ENCODE measurements at regions of chr9 and their contacts with region 1.

Region 1: DNA sequence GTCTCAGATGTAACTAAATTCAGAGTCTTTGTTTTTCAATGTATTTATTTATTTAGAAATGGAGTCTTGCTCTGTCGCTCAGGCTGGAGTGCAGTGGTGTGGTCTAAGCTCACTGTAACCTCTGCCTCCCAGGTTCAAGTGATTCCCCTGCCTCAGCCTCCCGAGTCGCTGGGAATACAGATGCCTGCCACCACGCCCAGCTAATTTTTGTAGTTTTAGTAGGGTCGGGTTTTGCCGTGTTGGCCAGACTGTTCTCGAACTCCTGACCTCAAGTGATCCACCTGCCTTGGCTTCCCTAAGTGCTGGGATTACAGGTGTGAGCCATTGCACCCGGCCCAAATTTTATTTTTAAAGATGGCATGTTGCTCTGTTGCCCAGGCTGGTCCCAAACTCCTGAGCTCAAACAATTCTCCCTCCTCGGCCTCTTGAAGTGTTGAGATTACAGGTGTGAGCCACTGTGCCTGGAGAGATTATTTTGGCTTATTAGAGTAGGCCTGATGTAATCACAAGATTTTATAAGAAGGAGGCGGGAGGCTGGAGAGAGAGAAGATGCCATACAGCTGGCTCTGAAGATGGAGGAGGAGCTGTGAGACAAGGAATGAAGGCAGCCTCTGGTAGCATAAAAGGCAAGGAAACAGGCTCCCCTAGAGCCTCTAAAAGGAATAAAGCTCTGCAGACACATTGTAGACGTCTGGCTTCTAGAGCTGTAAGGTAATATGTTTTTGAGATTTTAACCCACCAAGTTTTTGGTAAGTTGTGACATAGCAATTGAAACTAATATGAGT is 12.9 kb upstream of the KLF9 start:
- DNase-seq: no peak
- H3K4me3 ChIP-seq: no peak overlapping the region
- H3K27ac ChIP-seq: peak overlapping the region; percentile 15 to 56 (median 38)
- H3K4me1 ChIP-seq: peaks cover 0 to 15% (median 4%) of the 10 kb centered on the region in 4 donors
- H3K27me3 ChIP-seq: no peaks in the 10 kb centered on the region
- CTCF ChIP-seq: peak in 1 of 5 experiments; percentile 27
- EP300 ChIP-seq: no peak
- POLR2A ChIP-seq: no peak

Region 2: DNA sequence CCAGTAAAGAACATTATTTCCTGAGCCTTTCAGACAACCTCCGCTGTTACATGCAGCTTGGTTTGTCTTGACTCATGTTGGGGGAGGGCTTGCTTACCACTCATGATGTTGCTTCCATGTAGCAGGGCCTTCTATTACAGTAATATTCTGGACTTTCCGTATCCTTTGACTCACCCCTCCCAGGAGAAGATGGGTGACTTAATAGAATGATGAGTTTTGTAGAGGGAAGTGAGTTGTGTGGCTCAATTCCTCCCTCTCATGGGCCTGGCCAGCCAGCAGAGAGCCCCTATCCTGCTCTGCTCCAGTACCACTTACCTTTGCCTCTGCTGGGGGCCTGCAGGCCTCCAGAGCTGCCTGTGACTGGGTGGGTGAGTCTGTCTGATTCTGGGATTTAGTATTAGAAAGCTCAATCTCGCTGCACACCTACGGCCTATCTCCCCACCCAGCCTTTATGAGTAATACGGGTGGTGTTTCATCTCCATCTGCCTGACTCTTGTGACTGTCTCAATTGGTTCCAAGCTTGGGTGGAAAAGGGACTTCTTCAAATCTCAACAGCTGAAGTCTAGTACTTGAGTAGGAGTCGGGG is 39.7 kb after region 1 on chr9:
- in situ Hi-C with region 1: loop called in 1 of 4 experiments (anchors 5 kb)
- intact Hi-C with region 1: no loop called
- DNase-seq: no peak
- H3K4me3 ChIP-seq: no peak overlapping the region
- H3K27ac ChIP-seq: peak overlapping the region in 2 of 4 donors; percentile 31 to 84
- H3K4me1 ChIP-seq: peaks cover 11 to 28% (median 20%) of the 10 kb centered on the region in 4 donors
- H3K27me3 ChIP-seq: no peaks in the 10 kb centered on the region
- CTCF ChIP-seq: no peak
- EP300 ChIP-seq: no peak
- POLR2A ChIP-seq: no peak

Region 3: GRCh38 chr9:70534061-70534460 is 106.7 kb after region 1 on chr9:
- in situ Hi-C with region 1: no loop called
- intact Hi-C with region 1: no loop called
- DNase-seq: no peak
- H3K4me3 ChIP-seq: no peak overlapping the region
- H3K27ac ChIP-seq: no peak overlapping the region
- H3K4me1 ChIP-seq: peaks cover 0 to 3% (median 0%) of the 10 kb centered on the region in 4 donors
- H3K27me3 ChIP-seq: no peaks in the 10 kb centered on the region
- CTCF ChIP-seq: no peak
- EP300 ChIP-seq: no peak
- POLR2A ChIP-seq: no peak

Region 4: DNA sequence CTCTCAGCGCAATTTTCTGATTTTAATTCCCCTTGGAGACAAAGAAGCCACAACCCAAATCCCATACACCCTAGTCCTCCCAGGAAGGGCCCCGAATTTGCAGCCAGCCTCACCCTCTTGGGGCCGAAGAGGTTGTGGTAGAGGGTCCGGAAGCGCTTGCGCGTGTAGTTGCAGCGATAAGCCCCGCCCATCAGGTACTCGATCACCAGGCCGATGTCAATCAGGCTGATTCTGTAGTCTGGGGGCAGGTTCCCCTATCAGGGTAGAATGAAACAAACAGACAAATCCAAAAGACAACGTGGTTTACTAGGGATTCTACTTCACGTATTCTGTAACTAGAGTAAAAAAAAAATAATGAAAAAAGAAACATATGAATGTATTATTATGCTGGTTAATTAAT is 197.7 kb after region 1 on chr9:
- in situ Hi-C with region 1: no loop called
- intact Hi-C with region 1: no loop called
- DNase-seq: no peak
- H3K4me3 ChIP-seq: no peak overlapping the region
- H3K27ac ChIP-seq: no peak overlapping the region
- H3K4me1 ChIP-seq: no peaks in the 10 kb centered on the region
- H3K27me3 ChIP-seq: no peaks in the 10 kb centered on the region
- CTCF ChIP-seq: no peak
- EP300 ChIP-seq: no peak
- POLR2A ChIP-seq: no peak